ENCODE measurements at regions of chr14 and their contacts with region 1.

Region 1: DNA sequence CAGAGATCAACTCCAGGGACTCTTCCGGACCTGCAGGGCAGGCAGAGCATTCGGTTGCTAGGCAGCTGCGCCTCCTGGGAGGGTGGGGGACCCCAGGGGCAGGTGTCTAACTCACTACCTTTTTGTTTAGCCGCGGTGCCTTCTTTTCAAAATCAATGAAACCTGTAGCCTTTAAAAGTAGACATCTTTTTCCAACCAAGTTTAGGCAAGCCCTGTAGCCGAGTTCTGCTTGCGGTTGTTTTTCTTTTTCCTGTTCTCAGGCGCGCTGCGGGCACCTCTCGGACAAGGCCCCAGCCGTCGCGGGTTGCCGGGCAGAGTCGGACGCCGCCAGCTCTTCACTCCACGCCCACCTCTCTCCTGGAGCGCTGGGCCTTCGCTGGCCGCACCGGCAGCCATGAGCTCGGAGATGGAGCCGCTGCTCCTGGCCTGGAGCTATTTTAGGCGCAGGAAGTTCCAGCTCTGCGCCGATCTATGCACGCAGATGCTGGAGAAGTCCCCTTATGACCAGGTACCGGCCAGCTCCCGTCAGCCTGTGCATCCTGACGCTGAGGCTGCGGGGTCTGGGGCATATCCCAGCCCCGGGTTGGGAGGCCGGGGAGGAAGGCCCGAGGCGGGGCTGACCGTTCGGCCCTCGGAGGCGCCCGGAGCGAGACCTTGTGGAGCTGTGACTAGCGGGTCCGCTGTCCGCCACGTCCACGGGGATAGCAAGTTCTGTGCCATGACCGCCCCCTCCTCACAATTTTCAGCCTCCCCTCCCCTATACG is at the start of gene TTC8:
- DNase-seq: peak; percentile 90
- H3K4me3 ChIP-seq: peak within 1 kb of the TSS; percentile 75
- H3K27ac ChIP-seq: peak within 1 kb of the TSS; percentile 39
- H3K4me1 ChIP-seq: peaks cover 7% of the 10 kb centered on the region
- CTCF ChIP-seq: no peak
- total RNA-seq, gene TTC8: 2.7 and 3.0 TPM in 2 replicates

Region 2: DNA sequence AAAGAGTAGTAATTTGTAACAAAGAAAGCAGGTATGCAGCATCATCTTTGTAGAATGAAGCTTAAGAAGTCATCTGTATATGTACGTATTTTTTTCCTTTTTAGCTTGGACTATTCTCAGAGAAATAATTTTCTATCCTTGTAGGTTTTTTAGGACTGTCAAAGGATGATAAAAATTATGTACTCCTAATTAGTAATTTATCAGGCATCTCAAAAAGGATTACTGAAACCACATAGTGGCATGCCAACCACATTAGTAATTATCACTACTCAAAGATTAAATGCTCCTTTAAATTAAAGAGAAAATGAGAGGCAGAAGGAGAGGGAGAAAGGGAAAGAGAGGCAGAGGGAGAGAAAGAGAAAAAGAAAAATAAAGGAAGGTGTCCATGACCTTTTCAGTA is 17.2 kb after region 1 on chr14:
- CTCF ChIA-PET with region 1: no interaction called
- POLR2A ChIA-PET with region 1: interaction called, 13 read pairs
- intact Hi-C with region 1: no loop called
- DNase-seq: no peak
- H3K4me3 ChIP-seq: no peak overlapping the region
- H3K27ac ChIP-seq: no peak overlapping the region
- H3K4me1 ChIP-seq: no peaks in the 10 kb centered on the region
- CTCF ChIP-seq: no peak

Region 3: DNA sequence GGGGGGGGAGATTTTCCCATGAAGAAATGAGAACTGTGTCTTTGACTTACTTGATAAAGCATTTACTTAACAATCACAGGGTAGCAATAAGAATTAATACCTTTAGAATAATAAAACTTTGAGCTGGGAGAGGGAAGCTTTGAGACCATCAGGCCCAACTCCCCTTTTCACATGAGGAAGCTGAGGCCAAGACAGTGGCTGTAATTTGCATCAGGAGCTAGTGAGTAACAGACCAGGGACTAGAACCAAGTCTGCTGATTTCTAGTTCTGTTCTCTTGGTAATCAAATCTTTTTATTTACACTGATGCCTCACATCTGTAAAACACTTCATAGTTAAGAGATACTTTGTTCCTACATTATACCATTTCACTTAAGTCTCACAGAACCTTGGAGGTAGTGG is 28.6 kb after region 1 on chr14:
- CTCF ChIA-PET with region 1: no interaction called
- POLR2A ChIA-PET with region 1: interaction called, 10 read pairs
- intact Hi-C with region 1: no loop called
- DNase-seq: no peak
- H3K4me3 ChIP-seq: no peak overlapping the region
- H3K27ac ChIP-seq: no peak overlapping the region
- H3K4me1 ChIP-seq: no peaks in the 10 kb centered on the region
- CTCF ChIP-seq: no peak